Stomach (tissue), 19 donors: ENCODE measurements at regions of chr15 and their contacts with region 1.

Region 1: DNA sequence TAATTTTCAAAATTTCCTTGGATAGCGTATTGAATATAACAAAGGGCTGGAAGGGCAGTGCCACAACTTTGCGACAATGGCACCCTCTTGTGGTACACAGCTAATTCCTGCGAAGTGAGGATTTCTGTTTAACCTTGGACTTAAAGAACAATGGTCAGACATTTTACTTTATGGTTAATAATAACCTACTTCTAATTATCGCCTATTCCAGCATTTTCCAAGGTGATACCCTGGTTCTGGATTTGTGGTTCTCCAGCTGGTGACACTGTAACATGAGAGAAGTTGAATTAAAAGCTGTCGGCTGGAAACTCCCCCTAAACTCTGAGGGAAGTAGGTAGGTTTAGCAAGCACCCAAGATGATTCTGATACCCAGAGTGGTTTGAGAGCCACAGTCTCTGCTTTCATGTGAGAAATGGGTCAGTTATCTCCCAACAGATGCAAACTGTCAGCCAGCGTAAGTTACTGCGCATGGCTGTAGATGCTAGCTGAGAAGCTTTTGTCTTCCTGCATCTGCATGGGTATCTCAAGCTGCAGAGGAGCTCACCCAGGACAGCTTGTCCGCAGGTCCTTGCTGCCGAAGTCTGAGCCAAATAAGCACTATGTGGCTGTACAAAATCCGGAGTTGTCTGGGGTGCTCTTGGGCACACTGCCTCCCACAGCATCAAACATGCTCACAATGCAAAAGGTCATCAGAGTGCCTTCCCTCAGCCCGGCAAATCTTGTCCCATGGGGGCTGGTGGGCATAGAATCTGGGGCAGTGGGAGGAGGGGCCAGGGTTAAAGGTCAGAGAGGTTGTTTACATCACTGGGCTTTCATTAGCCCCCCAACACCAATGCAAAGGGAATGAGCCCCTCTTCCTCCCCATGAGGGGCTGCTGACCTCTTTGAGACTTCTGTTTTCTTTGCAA is 6.6 kb upstream of the CHSY1 start:
- DNase-seq: peak; percentile 71 to 92
- H3K4me3 ChIP-seq: no peak overlapping the region
- H3K27ac ChIP-seq: no peak overlapping the region
- H3K4me1 ChIP-seq: peaks cover 0 to 23% (median 10%) of the 10 kb centered on the region in 4 donors
- H3K27me3 ChIP-seq: no peaks in the 10 kb centered on the region
- CTCF ChIP-seq: peak in 5 of 7 experiments; percentile 68 to 87 (median 78)
- EP300 ChIP-seq: no peak
- POLR2A ChIP-seq: no peak

Region 2: GRCh38 chr15:101062471-101063171 is 195.9 kb before region 1 on chr15:
- intact Hi-C with region 1: no loop called
- DNase-seq: no peak
- H3K4me3 ChIP-seq: no peak overlapping the region
- H3K27ac ChIP-seq: no peak overlapping the region
- H3K4me1 ChIP-seq: peaks cover 0 to 19% (median 14%) of the 10 kb centered on the region in 4 donors
- H3K27me3 ChIP-seq: no peaks in the 10 kb centered on the region
- CTCF ChIP-seq: no peak
- EP300 ChIP-seq: no peak
- POLR2A ChIP-seq: no peak

Region 3: DNA sequence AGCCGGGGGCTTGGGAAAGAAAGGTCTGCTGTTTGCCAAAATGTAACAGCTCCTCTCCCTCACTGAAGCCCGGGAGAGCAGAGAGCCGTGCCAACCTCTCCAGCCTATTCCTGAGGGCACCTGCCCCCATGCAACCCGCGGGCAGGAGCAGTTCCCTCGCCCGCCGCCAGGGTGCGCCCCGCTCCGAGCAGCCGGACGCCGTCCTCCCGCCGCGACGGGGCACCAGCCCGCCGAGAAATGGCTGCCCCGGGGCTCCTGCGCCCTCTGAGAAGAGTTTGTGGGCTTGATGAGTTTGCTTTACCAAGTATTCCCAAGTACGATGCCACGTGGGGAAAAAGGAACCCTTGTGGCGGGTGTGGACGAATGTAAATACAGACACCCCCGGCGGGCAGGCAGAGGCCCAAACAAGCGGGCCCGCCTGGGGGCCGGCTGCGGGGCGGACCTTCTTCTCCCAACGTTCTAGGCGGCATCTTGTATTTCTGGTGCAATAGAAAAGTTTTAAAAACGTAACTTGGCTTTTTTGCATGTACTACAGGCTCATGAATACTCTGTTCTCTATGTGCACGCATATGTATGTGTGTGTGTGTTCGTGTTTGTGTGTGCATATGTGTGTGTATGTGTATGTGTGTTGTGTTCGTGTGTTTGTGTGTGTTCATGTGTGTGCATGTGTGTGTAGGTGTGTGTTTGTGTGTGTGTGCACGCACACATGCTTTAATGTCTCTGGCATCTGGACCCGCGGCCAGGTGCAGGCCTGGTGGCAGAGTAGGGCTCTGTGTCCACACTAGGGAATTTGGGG is 169.5 kb before region 1 on chr15:
- intact Hi-C with region 1: loop called (anchors 5 kb)
- DNase-seq: peak; percentile 84 to 88
- H3K4me3 ChIP-seq: peak overlapping the region; percentile 18 to 41 (median 34)
- H3K27ac ChIP-seq: peak overlapping the region in 1 of 5 donors; percentile 43
- H3K4me1 ChIP-seq: peaks cover 7 to 28% (median 21%) of the 10 kb centered on the region in 4 donors
- H3K27me3 ChIP-seq: no peaks in the 10 kb centered on the region
- CTCF ChIP-seq: peak in 6 of 7 experiments; percentile 76 to 100 (median 98)
- EP300 ChIP-seq: no peak
- POLR2A ChIP-seq: peak in 1 of 4 donors; percentile 54